ENCODE measurements at regions of chr5 and their contacts with region 1.

Region 1: GRCh38 chr5:138065102-138065501 is 18.7 kb upstream of the WNT8A start:
- DNase-seq: peak in 1 of 2 experiments; percentile 17
- ATAC-seq: peak; percentile 58 to 73; a peak in 4 of 6 replicates
- H3K4me3 ChIP-seq: no peak overlapping the region
- H3K27ac ChIP-seq: no peak overlapping the region
- H3K4me1 ChIP-seq: no peaks in the 10 kb centered on the region
- CTCF ChIP-seq: peak; percentile 29; the same call in 1 of the 3 replicates
- EP300 ChIP-seq: no peak
- POLR2A ChIP-seq: no peak
- RAD21 ChIP-seq: no peak; a peak in 1 of 5 replicates

Region 2: DNA sequence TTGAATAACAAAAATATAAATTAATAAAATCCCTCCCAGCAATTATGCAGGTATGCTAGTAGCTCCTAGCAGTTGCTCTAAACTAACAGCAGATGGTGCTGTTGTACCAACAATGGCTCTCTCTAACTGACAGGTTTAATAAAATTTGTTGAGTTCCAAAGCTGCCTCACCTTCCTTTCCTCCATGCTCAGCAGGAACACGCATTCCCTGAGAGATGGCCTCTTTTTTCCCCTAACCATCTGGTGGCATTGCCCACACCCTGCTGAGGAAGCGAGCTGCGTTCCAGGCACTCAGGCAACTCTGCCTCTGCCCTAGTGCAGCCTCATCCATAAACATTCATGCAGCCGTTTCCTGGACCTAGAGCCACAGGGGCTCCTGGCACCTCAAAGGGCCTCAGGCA is 435.5 kb before region 1 on chr5:
- CTCF ChIA-PET with region 1: interaction called, 21 read pairs
- POLR2A ChIA-PET with region 1: no interaction called
- DNase-seq: peak; percentile 60 to 77
- ATAC-seq: peak; percentile 66 to 92
- H3K4me3 ChIP-seq: no peak overlapping the region
- H3K27ac ChIP-seq: no peak overlapping the region
- H3K4me1 ChIP-seq: no peaks in the 10 kb centered on the region
- CTCF ChIP-seq: peak; percentile 87
- EP300 ChIP-seq: no peak
- POLR2A ChIP-seq: no peak
- RAD21 ChIP-seq: peak; percentile 89 to 91

Region 3: DNA sequence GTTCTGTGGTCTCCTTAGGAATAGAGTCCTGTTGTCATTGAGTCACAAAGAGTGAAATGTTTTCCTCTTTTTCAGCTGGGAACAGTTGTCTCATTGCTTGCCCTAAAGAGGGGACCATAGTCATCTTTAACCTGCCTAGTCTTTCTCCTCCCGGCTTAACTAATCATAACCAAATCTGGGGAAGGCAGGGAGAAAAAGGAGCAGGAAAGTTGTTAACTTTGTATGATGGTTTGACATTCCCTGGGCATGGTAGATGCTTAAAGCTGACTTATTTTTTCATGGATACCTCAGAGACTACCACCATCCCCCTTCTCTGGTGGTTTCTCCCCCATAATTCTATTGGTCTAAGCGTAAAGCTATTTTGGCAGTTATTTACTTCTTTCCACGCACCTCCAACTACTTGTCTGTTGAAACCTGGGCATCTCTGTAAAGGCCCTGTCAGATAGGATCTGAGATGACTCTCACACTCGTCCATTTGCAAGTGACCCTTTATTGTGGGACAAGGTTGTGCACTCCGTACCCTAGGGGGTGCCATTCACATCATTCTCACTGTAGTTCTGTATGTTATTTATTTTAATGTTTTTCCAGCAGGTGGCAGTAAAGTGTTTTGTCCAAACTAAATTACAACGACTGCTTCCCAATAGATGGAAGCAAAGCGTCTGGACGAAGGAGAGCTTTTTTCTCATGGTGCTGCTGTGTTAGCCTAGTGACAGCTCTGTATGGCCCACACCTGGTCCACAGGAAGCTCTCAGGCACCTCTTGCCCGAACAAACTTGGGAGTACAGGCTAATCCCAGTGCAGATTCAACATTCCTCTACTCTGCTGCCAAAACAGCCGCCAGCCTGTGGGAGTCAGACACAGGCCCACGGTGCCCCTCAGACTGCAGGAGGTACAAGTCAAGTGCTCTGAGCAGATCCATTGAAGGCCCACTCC is 29.2 kb before region 1 on chr5:
- CTCF ChIA-PET with region 1: interaction called, 402 read pairs
- POLR2A ChIA-PET with region 1: no interaction called
- DNase-seq: peak; percentile 69 to 93
- ATAC-seq: peak; percentile 71 to 79
- H3K4me3 ChIP-seq: no peak overlapping the region
- H3K27ac ChIP-seq: peak overlapping the region; percentile 44 to 65; a peak in 5 of 6 replicates
- H3K4me1 ChIP-seq: peaks cover 17% of the 10 kb centered on the region
- CTCF ChIP-seq: peak; percentile 99
- EP300 ChIP-seq: no peak
- POLR2A ChIP-seq: no peak
- RAD21 ChIP-seq: peak; percentile 84

Region 4: DNA sequence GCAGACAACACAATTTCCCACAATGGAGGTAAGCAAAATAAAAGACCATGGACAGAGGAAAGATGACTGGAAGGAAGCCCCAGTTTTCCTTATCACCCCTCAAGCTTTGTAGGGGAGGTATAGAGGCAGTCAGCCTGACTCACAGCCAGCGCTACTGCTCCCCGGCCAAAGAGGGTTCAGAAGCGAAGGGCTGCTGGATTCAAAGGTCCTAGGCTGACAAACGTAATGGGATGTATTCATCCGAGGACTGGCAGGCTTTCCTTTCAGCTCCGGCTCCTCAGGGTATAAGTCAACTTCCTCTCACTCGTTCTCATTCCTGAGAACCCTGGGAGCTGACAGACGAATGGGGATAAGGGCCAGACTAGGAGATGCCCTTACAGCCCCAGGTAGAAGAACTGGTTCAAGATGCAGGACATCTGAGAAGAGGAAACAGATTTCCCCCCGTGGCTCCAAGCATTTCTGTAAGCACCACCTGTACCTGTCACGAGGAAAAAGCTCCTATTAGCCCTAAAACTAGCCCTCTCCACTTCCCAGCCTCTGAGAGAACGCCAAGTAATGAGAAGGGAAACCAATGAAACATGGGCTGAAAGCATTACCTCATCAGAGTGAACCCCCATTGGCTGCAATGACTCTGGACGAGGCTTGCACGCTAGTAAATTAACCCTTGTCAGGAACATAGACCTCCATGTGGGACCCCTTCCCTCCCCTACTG is 10.1 kb before region 1 on chr5:
- CTCF ChIA-PET with region 1: interaction called, 35 read pairs
- POLR2A ChIA-PET with region 1: no interaction called
- DNase-seq: no peak
- ATAC-seq: peak; percentile 62 to 71
- H3K4me3 ChIP-seq: no peak overlapping the region
- H3K27ac ChIP-seq: no peak overlapping the region
- H3K4me1 ChIP-seq: no peaks in the 10 kb centered on the region
- CTCF ChIP-seq: no peak
- EP300 ChIP-seq: no peak
- POLR2A ChIP-seq: no peak
- RAD21 ChIP-seq: no peak

Region 5: DNA sequence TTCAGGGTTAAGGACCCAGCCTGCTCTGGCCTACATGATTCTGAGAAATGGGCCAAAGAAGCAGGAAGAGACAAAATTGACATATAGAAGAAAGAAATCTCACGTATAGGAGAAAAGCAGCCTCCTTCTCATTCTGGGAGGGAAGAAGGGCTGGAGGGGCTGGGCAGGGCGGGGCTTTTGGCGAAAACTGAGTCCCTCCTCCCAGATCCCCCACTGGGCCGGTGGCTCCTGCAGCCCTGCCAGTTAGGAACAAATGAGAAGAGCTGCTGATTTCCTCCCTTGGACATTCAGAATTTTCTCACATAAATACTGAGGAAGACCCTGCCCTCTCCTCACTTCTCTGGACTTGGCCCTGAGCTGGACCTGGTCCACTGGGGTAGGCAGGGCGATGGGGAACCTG is 18.6 kb after region 1 on chr5 and contains the start of gene WNT8A:
- CTCF ChIA-PET with region 1: interaction called, 36 read pairs
- POLR2A ChIA-PET with region 1: no interaction called
- DNase-seq: no peak
- ATAC-seq: no peak
- H3K4me3 ChIP-seq: no peak within 1 kb of the TSS
- H3K27ac ChIP-seq: no peak within 1 kb of the TSS
- H3K4me1 ChIP-seq: no peaks in the 10 kb centered on the region
- CTCF ChIP-seq: no peak
- EP300 ChIP-seq: no peak
- POLR2A ChIP-seq: no peak
- RAD21 ChIP-seq: no peak
- polyA plus RNA-seq, gene WNT8A: not detected in 2 replicates

Region 6: DNA sequence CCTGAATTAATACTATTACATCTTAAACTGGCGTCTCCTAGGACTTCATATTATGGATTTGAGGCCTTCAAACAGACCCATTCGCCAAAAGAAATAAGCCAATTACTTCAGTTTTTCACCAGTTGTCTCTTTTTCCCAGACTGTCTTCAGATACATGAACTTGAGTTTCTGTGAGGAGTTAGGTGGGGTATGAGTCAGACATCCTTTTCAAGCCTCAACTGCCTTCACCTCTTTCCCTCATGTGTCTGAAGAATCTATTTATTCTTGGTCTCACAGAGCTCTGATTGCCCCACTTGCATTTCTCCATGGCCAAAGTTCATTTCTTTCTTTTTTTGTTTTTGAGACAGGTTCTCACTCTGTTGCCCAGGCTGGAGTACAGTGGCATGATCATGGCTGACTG is 31.3 kb after region 1 on chr5:
- CTCF ChIA-PET with region 1: interaction called, 13 read pairs
- POLR2A ChIA-PET with region 1: no interaction called
- DNase-seq: no peak
- ATAC-seq: no peak
- H3K4me3 ChIP-seq: no peak overlapping the region
- H3K27ac ChIP-seq: no peak overlapping the region
- H3K4me1 ChIP-seq: no peaks in the 10 kb centered on the region
- CTCF ChIP-seq: no peak
- EP300 ChIP-seq: no peak
- POLR2A ChIP-seq: no peak
- RAD21 ChIP-seq: no peak

Region 7: GRCh38 chr5:138128334-138128733 is 63.2 kb after region 1 on chr5:
- CTCF ChIA-PET with region 1: interaction called, 27 read pairs
- POLR2A ChIA-PET with region 1: no interaction called
- DNase-seq: no peak
- ATAC-seq: no peak
- H3K4me3 ChIP-seq: no peak overlapping the region
- H3K27ac ChIP-seq: no peak overlapping the region
- H3K4me1 ChIP-seq: 0 out of 3 replicates have a peak, but pooled peaks cover 4% of the 10 kb centered on the region
- CTCF ChIP-seq: no peak
- EP300 ChIP-seq: no peak
- POLR2A ChIP-seq: no peak
- RAD21 ChIP-seq: no peak

Region 8: DNA sequence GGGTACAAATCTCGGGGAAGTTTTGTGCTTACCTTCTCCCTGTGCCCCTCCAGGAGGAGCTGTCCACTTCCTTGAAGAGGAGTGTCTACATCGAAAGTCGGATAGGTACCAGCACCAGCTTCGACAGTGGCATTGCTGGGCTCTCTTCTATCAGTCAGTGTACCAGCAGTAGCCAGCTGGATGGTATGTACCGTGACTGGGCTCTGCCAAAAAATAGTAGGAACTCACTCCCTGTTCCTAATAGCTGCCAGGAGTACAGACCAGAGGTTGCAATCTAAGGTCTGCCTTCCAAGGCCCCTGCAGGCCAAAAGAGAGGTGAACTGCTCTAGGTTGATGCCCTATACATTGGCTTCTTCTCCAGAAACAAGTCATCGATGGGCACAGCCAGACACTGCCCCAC is 117.7 kb after region 1 on chr5:
- CTCF ChIA-PET with region 1: no interaction called
- POLR2A ChIA-PET with region 1: no interaction called
- DNase-seq: no peak
- ATAC-seq: no peak
- H3K4me3 ChIP-seq: no peak overlapping the region
- H3K27ac ChIP-seq: no peak overlapping the region
- H3K4me1 ChIP-seq: peaks cover 8% of the 10 kb centered on the region
- CTCF ChIP-seq: no peak
- EP300 ChIP-seq: no peak
- POLR2A ChIP-seq: no peak
- RAD21 ChIP-seq: no peak